ENCODE measurements at regions of chr15 and their contacts with region 1.

Region 1: GRCh38 chr15:75738647-75739331 is 26.1 kb upstream of the CSPG4 start:
- DNase-seq: peak; percentile 93
- H3K4me3 Mint-ChIP-seq: peak overlapping the region; percentile 66
- H3K27ac Mint-ChIP-seq: no peak overlapping the region
- H3K4me1 Mint-ChIP-seq: peaks cover 10% of the 10 kb centered on the region
- H3K27me3 Mint-ChIP-seq: peaks cover 34% of the 10 kb centered on the region

Region 2: DNA sequence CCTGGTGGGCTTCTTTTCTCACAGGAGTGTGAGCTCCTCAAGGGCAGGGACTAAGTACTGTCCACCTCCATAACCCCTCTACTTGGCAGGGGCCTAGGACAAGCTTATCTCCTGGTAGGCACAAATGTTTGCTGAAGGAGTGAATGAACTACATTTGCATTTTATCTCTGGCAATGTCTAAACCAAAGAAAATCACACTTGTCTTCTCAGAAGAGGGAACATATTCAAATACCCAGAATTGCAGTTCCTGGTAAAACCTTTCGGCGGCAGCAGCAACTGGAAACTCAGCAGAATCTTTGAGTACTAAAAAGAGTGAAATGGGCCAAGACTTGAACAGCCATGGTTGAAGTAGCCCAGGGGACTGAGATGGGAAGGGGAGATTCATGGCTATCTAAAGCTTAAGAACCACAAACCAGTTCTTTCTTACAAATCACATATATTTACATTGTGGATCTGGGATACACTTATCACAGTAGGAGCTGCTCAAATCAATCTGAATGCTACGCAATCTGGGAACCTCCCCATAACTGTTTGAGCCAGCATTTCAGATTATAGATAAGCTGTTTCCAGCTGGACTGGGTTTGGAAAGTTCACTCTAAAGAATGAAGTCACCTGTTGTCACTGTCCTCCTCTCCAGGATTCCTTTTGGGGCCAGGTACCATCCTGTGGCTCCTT is 141.0 kb before region 1 on chr15:
- CTCF ChIA-PET with region 1: no interaction called
- POLR2A ChIA-PET with region 1: no interaction called
- DNase-seq: peak; percentile 77
- H3K4me3 Mint-ChIP-seq: peak overlapping the region; percentile 53
- H3K27ac Mint-ChIP-seq: peak overlapping the region; percentile 96
- H3K4me1 Mint-ChIP-seq: peaks cover 50% of the 10 kb centered on the region
- H3K27me3 Mint-ChIP-seq: no peaks in the 10 kb centered on the region

Region 3: GRCh38 chr15:75620841-75621391 is 117.9 kb before region 1 on chr15:
- CTCF ChIA-PET with region 1: no interaction called
- POLR2A ChIA-PET with region 1: no interaction called
- DNase-seq: no peak
- H3K4me3 Mint-ChIP-seq: no peak overlapping the region
- H3K27ac Mint-ChIP-seq: peak overlapping the region; percentile 55
- H3K4me1 Mint-ChIP-seq: peaks cover 33% of the 10 kb centered on the region
- H3K27me3 Mint-ChIP-seq: no peaks in the 10 kb centered on the region

Region 4: GRCh38 chr15:75684642-75685041 is 54.1 kb before region 1 on chr15:
- CTCF ChIA-PET with region 1: no interaction called
- POLR2A ChIA-PET with region 1: no interaction called
- DNase-seq: no peak
- H3K4me3 Mint-ChIP-seq: no peak overlapping the region
- H3K27ac Mint-ChIP-seq: no peak overlapping the region
- H3K4me1 Mint-ChIP-seq: no peaks in the 10 kb centered on the region
- H3K27me3 Mint-ChIP-seq: no peaks in the 10 kb centered on the region

Region 5: GRCh38 chr15:75723847-75724660 is 14.7 kb before region 1 on chr15:
- CTCF ChIA-PET with region 1: interaction called, 10 read pairs
- POLR2A ChIA-PET with region 1: interaction called, 4 read pairs
- DNase-seq: peak; percentile 54
- H3K4me3 Mint-ChIP-seq: no peak overlapping the region
- H3K27ac Mint-ChIP-seq: no peak overlapping the region
- H3K4me1 Mint-ChIP-seq: peaks cover 3% of the 10 kb centered on the region
- H3K27me3 Mint-ChIP-seq: peaks cover 11% of the 10 kb centered on the region